ENCODE measurements at regions of chr16 and their contacts with region 1.

Region 1: GRCh38 chr16:48632137-48632774 is 22.3 kb upstream of the N4BP1 start:
- DNase-seq: peak; percentile 51 to 53
- H3K4me3 ChIP-seq: no peak overlapping the region
- H3K4me3 Mint-ChIP-seq: no peak overlapping the region
- H3K27ac Mint-ChIP-seq: no peak overlapping the region
- H3K4me1 ChIP-seq: peaks cover 10% of the 10 kb centered on the region
- H3K4me1 Mint-ChIP-seq: peaks cover 10% of the 10 kb centered on the region
- H3K27me3 ChIP-seq: no peaks in the 10 kb centered on the region
- H3K27me3 Mint-ChIP-seq: no peaks in the 10 kb centered on the region
- CTCF ChIP-seq: no peak

Region 2: DNA sequence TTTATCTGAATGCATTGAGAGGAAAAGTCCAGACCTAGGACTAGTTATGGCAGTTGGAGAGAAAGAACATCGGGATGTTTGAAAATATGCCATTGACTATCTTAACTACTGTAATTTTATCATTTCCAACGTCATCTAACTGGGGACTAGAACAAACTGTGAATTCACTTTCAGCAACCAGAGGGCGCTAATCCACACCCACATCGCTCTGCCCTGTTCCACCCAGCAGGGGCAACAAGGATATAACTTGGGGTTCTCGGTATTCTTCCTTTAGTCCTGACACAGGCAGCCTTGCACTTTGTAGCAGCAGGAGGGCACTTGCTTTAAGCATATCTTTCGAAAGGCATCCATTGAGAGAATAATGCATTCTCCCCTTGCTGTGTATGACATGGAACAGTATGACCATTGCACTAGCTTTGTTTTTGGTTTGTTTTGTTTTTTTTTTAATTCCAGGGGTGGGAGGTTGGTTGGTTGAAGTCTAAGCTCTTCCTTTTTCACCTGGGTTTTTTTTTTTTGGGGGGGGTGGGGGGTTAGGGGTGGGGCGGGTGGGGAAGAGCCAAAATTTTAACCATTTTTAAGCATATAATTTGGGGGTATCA is 278.6 kb before region 1 on chr16:
- CTCF ChIA-PET with region 1: interaction called, 3 read pairs
- POLR2A ChIA-PET with region 1: interaction called, 3 read pairs
- intact Hi-C with region 1: loop called (anchors 1 kb)
- DNase-seq: peak; percentile 63 to 75
- H3K4me3 ChIP-seq: no peak overlapping the region
- H3K4me3 Mint-ChIP-seq: no peak overlapping the region
- H3K27ac Mint-ChIP-seq: no peak overlapping the region
- H3K4me1 ChIP-seq: no peaks in the 10 kb centered on the region
- H3K4me1 Mint-ChIP-seq: no peaks in the 10 kb centered on the region
- H3K27me3 ChIP-seq: no peaks in the 10 kb centered on the region
- H3K27me3 Mint-ChIP-seq: no peaks in the 10 kb centered on the region
- CTCF ChIP-seq: peak; percentile 83 to 95

Region 3: GRCh38 chr16:48499923-48500381 is 132.3 kb before region 1 on chr16:
- CTCF ChIA-PET with region 1: no interaction called
- POLR2A ChIA-PET with region 1: no interaction called
- intact Hi-C with region 1: no loop called
- DNase-seq: no peak
- H3K4me3 ChIP-seq: no peak overlapping the region
- H3K4me3 Mint-ChIP-seq: no peak overlapping the region
- H3K27ac Mint-ChIP-seq: no peak overlapping the region
- H3K4me1 ChIP-seq: no peaks in the 10 kb centered on the region
- H3K4me1 Mint-ChIP-seq: no peaks in the 10 kb centered on the region
- H3K27me3 ChIP-seq: no peaks in the 10 kb centered on the region
- H3K27me3 Mint-ChIP-seq: peaks cover 3% of the 10 kb centered on the region
- CTCF ChIP-seq: no peak

Region 4: DNA sequence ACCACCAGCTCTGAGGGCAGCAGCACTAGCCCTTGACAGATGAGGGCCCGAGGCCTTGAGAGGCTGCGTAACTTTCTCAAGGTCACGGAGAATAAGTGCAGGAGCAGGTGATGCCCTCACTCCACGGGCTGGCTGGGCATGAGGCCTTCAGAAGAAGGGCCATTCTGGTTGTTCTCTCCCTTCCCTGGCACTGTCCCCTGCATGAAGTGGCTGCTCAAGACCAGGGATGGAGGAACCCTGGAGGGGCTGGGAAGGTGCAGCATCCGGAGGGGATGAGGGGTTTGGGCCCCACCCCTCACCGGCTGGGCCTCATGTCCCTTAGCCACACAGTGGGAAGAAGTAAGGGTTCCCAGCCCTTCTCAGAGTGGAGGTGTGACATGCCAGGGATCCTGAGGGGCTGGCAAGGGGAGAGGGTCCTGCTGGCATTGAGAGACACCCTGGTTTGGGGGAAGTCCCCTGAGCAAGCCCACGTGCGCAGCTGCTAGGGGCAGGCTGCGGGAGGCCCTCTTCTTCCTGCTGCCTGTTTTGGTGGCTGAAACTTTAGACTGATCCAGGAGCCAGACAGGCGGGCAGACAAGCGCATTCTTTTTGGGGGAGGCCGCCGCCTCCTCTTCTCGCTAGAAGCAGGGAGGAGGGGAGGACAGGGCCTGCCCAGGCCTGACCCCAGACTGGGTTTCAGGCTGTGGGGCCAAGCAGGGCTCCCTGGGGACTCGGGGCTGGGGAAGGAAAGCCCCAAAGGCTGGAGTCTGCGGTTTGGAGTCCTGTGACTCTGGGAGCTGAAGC is 96.2 kb before region 1 on chr16:
- CTCF ChIA-PET with region 1: interaction called, 5 read pairs
- POLR2A ChIA-PET with region 1: no interaction called
- intact Hi-C with region 1: loop called (anchors 1 kb)
- DNase-seq: no peak
- H3K4me3 ChIP-seq: no peak overlapping the region
- H3K4me3 Mint-ChIP-seq: no peak overlapping the region
- H3K27ac Mint-ChIP-seq: no peak overlapping the region
- H3K4me1 ChIP-seq: no peaks in the 10 kb centered on the region
- H3K4me1 Mint-ChIP-seq: no peaks in the 10 kb centered on the region
- H3K27me3 ChIP-seq: no peaks in the 10 kb centered on the region
- H3K27me3 Mint-ChIP-seq: no peaks in the 10 kb centered on the region
- CTCF ChIP-seq: no peak

Region 5: DNA sequence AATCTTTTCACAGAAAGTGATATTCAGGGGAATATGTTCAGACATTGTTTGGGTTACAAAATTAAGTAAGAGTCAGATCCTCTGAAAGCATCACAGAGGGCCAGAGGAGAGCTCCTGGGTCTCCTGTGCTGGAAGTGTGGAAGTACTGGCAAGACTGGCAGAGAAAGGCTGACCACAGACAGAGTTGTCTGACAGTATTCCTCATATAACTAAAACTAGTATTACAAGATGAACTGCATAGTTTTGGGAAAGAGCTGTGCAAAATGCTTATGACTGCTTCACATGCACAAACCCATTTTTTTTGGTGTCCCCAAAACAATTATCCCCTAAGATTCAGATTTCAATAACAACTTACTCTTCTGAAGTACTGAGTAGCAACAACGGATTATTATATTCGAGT is 57.5 kb before region 1 on chr16:
- CTCF ChIA-PET with region 1: interaction called, 10 read pairs
- POLR2A ChIA-PET with region 1: no interaction called
- intact Hi-C with region 1: no loop called
- DNase-seq: no peak
- H3K4me3 ChIP-seq: no peak overlapping the region
- H3K4me3 Mint-ChIP-seq: no peak overlapping the region
- H3K27ac Mint-ChIP-seq: no peak overlapping the region
- H3K4me1 ChIP-seq: peaks cover 22% of the 10 kb centered on the region
- H3K4me1 Mint-ChIP-seq: peaks cover 19% of the 10 kb centered on the region
- H3K27me3 ChIP-seq: no peaks in the 10 kb centered on the region
- H3K27me3 Mint-ChIP-seq: no peaks in the 10 kb centered on the region
- CTCF ChIP-seq: no peak

Measured in Caco-2 (cell line).